A549 (cell line): ENCODE measurements at regions of chr4 and their contacts with region 1.

Region 1: DNA sequence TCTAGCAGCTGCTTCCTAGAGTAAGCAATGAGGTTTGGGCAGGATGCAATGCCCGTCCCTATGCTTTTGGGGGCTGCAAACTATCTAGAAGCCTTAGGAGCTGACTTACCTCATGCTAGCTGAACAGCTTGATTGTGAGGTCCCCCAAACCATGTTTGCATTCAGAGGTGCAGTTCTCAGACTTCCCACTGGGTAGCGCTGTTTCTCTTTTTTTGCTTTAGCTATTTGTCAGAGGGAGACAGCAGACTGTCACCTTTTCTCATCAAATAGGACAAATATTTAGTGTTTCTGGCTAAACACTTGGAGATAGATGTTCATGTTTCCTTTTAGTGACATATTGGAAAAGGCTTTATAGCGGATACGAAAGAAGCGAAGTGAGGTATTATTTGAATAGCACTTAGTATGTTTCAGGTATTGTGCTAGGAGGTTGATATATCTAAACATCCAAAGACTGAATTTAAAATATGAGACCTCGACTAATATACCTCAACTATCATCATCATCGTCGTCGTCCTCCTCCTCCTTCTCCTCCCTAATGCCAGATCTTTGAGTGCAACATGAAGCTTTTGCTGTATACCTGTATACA is 18.7 kb upstream of the TMEM192 start:
- DNase-seq: peak; percentile 39 to 44
- ATAC-seq: peak; percentile 93 to 94
- H3K4me3 ChIP-seq: no peak overlapping the region
- H3K27ac ChIP-seq: no peak overlapping the region
- H3K4me1 ChIP-seq: no peaks in the 10 kb centered on the region
- CTCF ChIP-seq: peak; percentile 77
- EP300 ChIP-seq: no peak
- POLR2A ChIP-seq: no peak
- RAD21 ChIP-seq: peak; percentile 82 to 86

Region 2: GRCh38 chr4:165118256-165118909 is 13.0 kb before region 1 on chr4:
- CTCF ChIA-PET with region 1: interaction called, 14 read pairs
- POLR2A ChIA-PET with region 1: no interaction called
- DNase-seq: no peak
- ATAC-seq: no peak
- H3K4me3 ChIP-seq: no peak overlapping the region
- H3K27ac ChIP-seq: no peak overlapping the region
- H3K4me1 ChIP-seq: 0 out of 3 replicates have a peak, but pooled peaks cover 3% of the 10 kb centered on the region
- CTCF ChIP-seq: no peak
- EP300 ChIP-seq: no peak
- POLR2A ChIP-seq: no peak
- RAD21 ChIP-seq: no peak

Region 3: GRCh38 chr4:165301833-165302232 is 170.5 kb after region 1 on chr4:
- CTCF ChIA-PET with region 1: no interaction called
- POLR2A ChIA-PET with region 1: no interaction called
- DNase-seq: no peak
- ATAC-seq: peak; percentile 19 to 51; a peak in 1 of 6 replicates
- H3K4me3 ChIP-seq: 0 out of 3 replicates have a peak overlapping the region, but pooled peaks have one; percentile 16
- H3K27ac ChIP-seq: 0 out of 6 replicates have a peak overlapping the region, but pooled peaks of 1 of the 2 experiments have one; percentile 13
- H3K4me1 ChIP-seq: peaks cover 3% of the 10 kb centered on the region; the same call in 1 of the 3 replicates
- CTCF ChIP-seq: no peak
- EP300 ChIP-seq: no peak
- POLR2A ChIP-seq: no peak
- RAD21 ChIP-seq: no peak

Region 4: DNA sequence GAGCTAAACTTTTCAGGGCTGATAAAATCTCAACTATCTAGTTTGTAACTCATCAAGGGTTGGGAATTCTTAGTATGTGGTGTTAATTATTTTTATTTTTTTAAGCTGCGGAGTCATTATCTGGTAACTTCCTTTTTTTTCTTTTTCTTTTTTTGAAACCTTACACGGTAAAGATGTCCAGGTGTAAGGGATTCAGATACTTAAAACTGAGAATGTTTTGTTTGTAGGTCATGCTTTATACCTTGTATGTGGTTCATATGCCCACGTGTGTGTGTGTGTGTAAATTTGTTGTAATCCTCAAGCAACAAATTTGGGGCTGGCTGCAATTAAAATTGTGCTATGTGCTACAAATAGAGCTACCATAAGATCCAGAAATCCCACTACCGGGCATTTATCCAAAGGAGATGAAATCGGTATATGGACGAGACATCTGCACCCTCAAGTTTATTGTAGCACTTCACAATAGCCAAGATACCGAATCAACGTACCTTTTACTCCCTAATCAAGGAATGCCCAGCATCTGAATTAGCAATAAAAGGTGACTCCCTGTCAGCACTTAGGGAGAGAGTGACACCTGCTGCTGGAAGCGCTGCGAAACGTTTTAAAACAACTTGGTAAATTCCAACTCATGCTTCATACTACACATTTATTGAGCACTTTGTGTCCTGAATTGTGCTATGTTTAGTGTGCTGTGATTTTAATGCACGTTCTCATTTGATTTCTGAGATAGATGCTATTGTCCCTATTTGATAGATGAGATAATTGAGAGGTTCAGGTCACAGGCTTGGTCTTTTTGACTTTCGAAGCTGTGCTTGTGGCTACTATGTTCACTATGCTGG is 212.2 kb after region 1 on chr4:
- CTCF ChIA-PET with region 1: interaction called, 84 read pairs
- POLR2A ChIA-PET with region 1: no interaction called
- DNase-seq: peak in 1 of 2 experiments; percentile 24
- ATAC-seq: 0 out of 6 replicates have a peak, but pooled peaks of 1 of the 2 experiments have one; percentile 38
- H3K4me3 ChIP-seq: no peak overlapping the region
- H3K27ac ChIP-seq: no peak overlapping the region
- H3K4me1 ChIP-seq: no peaks in the 10 kb centered on the region
- CTCF ChIP-seq: peak; percentile 39
- EP300 ChIP-seq: no peak
- POLR2A ChIP-seq: no peak
- RAD21 ChIP-seq: peak; percentile 53 to 55; a peak in 4 of 5 replicates

Region 5: DNA sequence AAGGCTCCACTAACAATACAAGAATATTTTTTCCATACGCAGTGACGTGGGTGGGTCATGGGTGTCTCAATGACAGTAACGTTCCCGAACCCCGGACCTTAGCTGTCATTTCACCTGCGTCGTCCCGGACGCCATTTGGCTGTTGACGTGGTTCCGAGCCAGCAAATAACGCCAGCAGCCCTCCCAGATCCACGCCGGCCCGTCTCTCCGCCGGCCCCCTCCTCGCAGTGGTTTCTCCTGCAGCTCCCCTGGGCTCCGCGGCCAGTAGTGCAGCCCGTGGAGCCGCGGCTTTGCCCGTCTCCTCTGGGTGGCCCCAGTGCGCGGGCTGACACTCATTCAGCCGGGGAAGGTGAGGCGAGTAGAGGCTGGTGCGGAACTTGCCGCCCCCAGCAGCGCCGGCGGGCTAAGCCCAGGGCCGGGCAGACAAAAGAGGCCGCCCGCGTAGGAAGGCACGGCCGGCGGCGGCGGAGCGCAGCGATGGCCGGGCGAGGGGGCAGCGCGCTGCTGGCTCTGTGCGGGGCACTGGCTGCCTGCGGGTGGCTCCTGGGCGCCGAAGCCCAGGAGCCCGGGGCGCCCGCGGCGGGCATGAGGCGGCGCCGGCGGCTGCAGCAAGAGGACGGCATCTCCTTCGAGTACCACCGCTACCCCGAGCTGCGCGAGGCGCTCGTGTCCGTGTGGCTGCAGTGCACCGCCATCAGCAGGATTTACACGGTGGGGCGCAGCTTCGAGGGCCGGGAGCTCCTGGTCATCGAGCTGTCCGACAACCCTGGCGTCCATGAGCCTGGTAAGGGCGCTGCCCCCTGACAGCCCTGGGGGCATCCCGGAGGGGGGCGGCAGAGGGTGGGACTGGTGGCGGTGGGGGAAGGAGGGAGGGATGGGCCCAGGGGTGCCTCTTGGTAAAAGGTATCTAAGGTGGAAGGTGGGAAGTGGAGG is 247.7 kb after region 1 on chr4 and contains the start of gene CPE:
- CTCF ChIA-PET with region 1: interaction called, 11 read pairs
- POLR2A ChIA-PET with region 1: no interaction called
- DNase-seq: peak; percentile 58 to 61
- ATAC-seq: peak; percentile 100
- H3K4me3 ChIP-seq: peak within 1 kb of the TSS; percentile 57
- H3K27ac ChIP-seq: peak within 1 kb of the TSS; percentile 53 to 77; a peak in 4 of 6 replicates
- H3K4me1 ChIP-seq: 0 out of 3 replicates have a peak, but pooled peaks cover 5% of the 10 kb centered on the region
- CTCF ChIP-seq: no peak; the same call in 2 of the 3 replicates
- EP300 ChIP-seq: no peak
- POLR2A ChIP-seq: 0 out of 2 replicates have a peak, but pooled peaks have one; percentile 22
- RAD21 ChIP-seq: no peak; a peak in 1 of 5 replicates
- polyA plus RNA-seq, gene CPE: 1.2 and 1.6 TPM in 2 replicates

Region 6: GRCh38 chr4:165464813-165465381 is 333.6 kb after region 1 on chr4:
- CTCF ChIA-PET with region 1: interaction called, 21 read pairs
- POLR2A ChIA-PET with region 1: no interaction called
- DNase-seq: peak; percentile 26 to 28
- ATAC-seq: peak; percentile 50 to 83; a peak in 4 of 6 replicates
- H3K4me3 ChIP-seq: no peak overlapping the region
- H3K27ac ChIP-seq: no peak overlapping the region
- H3K4me1 ChIP-seq: no peaks in the 10 kb centered on the region
- CTCF ChIP-seq: peak; percentile 82
- EP300 ChIP-seq: no peak
- POLR2A ChIP-seq: no peak
- RAD21 ChIP-seq: peak; percentile 81 to 84

Region 7: GRCh38 chr4:165563851-165564250 is 432.5 kb after region 1 on chr4:
- CTCF ChIA-PET with region 1: no interaction called
- POLR2A ChIA-PET with region 1: no interaction called
- DNase-seq: no peak
- ATAC-seq: no peak
- H3K4me3 ChIP-seq: no peak overlapping the region
- H3K27ac ChIP-seq: no peak overlapping the region
- H3K4me1 ChIP-seq: no peaks in the 10 kb centered on the region
- CTCF ChIP-seq: no peak
- EP300 ChIP-seq: no peak
- POLR2A ChIP-seq: no peak
- RAD21 ChIP-seq: no peak